ENCODE measurements at regions of chr3 and their contacts with region 1.

Region 1: DNA sequence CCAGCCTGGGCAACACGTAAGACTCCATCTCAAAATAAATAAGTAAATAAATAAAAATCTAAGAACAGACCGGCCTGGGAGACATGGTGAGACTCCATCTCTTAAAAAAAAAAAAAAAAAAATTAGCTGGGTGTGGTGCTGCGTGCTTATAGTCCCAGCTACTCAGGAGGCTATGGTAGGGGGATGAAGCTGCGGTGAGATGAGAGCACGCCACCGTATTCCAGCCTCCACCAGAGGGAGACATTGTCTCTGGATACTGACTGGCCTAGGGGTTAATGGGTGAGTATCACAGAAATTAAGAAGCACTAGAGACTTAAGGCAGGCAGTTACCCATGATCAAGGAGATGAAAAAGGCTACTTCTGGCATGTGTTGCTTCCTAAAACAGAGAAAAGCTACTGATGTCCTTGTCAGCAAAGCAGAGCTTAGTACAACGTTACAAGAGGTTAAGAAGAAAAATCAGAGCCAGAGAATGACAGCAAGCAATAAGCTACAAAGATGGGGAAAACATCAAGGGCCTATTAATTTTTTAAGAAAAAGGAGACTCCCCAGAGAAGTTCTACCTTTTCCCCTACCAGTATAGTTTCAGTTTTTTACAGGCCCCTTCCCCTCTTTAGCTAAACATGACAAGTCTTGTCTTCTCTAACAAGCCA is 8.6 kb downstream of the TFRC start:
- DNase-seq: peak; percentile 39
- ATAC-seq: peak; percentile 97
- H3K4me3 Mint-ChIP-seq: no peak overlapping the region
- H3K27ac Mint-ChIP-seq: no peak overlapping the region
- H3K4me1 Mint-ChIP-seq: peaks cover 31% of the 10 kb centered on the region
- H3K27me3 Mint-ChIP-seq: no peaks in the 10 kb centered on the region
- CTCF ChIP-seq: no peak

Region 2: DNA sequence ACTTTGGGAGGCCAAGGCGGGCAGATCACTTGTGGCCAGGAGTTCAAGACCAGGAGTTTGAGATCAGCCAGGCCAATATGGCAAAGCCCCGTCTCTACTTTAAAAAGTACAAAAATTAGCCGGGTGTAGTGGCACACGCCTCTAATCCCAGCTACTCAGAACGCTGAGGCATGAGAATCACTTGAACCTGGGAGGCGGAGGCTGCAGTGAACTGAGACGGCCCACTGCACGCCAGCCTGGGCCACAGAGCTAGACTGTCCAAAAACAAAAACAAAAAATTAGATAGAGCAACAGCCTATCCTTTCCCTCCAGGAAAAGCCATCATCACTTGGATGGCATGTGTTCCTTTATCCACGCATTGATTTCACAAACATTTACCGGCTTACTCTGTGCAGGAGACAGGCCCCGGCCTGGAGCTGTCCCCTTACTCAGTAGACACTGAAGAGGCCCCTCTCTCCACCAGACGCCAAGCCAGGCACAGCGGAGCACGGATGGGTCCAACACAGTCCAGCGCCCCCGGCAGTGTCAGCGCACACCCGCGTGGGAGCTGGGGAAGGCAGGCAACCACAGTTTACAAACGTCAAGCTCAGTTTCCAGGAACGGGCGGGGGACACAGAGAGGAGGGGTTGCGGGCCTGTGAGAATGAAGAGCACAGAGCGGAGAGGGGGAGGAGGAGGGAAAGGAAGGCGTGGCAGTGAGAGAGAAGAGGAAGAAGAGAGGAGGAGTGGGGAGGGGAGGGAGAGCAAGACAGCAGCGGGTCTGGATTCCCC is 1677.3 kb before region 1 on chr3:
- CTCF ChIA-PET with region 1: no interaction called
- POLR2A ChIA-PET with region 1: no interaction called
- intact Hi-C with region 1: no loop called
- DNase-seq: no peak
- ATAC-seq: no peak
- H3K4me3 Mint-ChIP-seq: peak overlapping the region; percentile 48
- H3K27ac Mint-ChIP-seq: no peak overlapping the region
- H3K4me1 Mint-ChIP-seq: peaks cover 32% of the 10 kb centered on the region
- H3K27me3 Mint-ChIP-seq: peaks cover 28% of the 10 kb centered on the region
- CTCF ChIP-seq: no peak

Region 3: GRCh38 chr3:195850857-195851543 is 222.3 kb before region 1 on chr3:
- CTCF ChIA-PET with region 1: no interaction called
- POLR2A ChIA-PET with region 1: no interaction called
- intact Hi-C with region 1: no loop called
- DNase-seq: peak; percentile 61
- ATAC-seq: peak; percentile 100
- H3K4me3 Mint-ChIP-seq: peak overlapping the region; percentile 35
- H3K27ac Mint-ChIP-seq: no peak overlapping the region
- H3K4me1 Mint-ChIP-seq: peaks cover 10% of the 10 kb centered on the region
- H3K27me3 Mint-ChIP-seq: peaks cover 11% of the 10 kb centered on the region
- CTCF ChIP-seq: peak; percentile 100

Region 4: GRCh38 chr3:196096382-196096953 is 23.2 kb after region 1 on chr3:
- CTCF ChIA-PET with region 1: interaction called, 10 read pairs
- POLR2A ChIA-PET with region 1: interaction called, 6 read pairs
- intact Hi-C with region 1: no loop called
- DNase-seq: peak; percentile 18
- ATAC-seq: peak; percentile 82
- H3K4me3 Mint-ChIP-seq: peak overlapping the region; percentile 61
- H3K27ac Mint-ChIP-seq: peak overlapping the region; percentile 89
- H3K4me1 Mint-ChIP-seq: peaks cover 42% of the 10 kb centered on the region
- H3K27me3 Mint-ChIP-seq: no peaks in the 10 kb centered on the region
- CTCF ChIP-seq: no peak

Region 5: DNA sequence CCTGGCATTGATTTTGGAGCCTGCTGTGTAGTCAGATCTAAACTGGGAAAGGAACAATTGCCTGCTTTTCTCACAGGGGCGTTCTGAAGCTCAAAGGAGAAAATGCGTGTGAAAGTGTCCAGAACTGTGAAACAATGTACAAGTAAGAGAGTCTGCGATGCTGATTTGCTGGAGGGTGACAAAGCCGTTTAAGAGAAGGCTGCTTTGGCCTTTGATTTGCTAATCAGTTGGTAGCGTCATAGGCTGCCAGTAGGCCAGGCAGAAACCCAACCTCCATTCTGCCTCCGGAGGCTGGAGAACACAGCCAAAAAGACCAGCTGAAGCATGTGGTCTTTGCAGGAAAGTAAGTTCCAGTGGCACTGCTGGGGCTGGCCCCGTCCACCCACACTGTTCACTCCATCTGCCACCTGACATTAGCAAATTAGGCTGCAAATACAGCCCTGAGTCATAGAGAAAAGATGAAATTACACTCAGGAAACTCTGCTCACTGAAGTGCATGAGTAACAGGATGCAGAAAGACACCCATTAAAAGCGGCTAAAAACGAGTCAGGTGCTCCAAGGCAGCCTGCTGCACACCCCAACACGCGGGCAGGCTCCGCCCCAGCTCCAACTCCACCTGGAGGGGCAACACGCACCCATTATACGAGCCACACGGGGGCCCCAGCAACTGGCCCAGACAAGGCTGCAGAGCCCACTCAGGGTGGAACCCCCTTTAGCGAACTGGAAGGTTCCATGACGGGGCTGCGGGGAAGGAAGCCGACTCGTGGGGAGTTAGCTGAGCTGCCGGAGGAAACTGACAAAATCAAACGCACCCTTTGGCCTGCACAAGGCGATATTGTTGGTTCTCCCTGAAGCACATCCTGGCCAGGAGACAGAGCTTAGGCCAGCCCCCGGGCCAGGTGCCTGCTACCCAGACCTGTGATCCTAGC is 106.3 kb after region 1 on chr3:
- CTCF ChIA-PET with region 1: interaction called, 36 read pairs
- POLR2A ChIA-PET with region 1: interaction called, 14 read pairs
- intact Hi-C with region 1: loop called (anchors 1 kb)
- DNase-seq: peak; percentile 73
- ATAC-seq: peak; percentile 80
- H3K4me3 Mint-ChIP-seq: peak overlapping the region; percentile 66
- H3K27ac Mint-ChIP-seq: peak overlapping the region; percentile 97
- H3K4me1 Mint-ChIP-seq: peaks cover 48% of the 10 kb centered on the region
- H3K27me3 Mint-ChIP-seq: no peaks in the 10 kb centered on the region
- CTCF ChIP-seq: no peak

Region 6: DNA sequence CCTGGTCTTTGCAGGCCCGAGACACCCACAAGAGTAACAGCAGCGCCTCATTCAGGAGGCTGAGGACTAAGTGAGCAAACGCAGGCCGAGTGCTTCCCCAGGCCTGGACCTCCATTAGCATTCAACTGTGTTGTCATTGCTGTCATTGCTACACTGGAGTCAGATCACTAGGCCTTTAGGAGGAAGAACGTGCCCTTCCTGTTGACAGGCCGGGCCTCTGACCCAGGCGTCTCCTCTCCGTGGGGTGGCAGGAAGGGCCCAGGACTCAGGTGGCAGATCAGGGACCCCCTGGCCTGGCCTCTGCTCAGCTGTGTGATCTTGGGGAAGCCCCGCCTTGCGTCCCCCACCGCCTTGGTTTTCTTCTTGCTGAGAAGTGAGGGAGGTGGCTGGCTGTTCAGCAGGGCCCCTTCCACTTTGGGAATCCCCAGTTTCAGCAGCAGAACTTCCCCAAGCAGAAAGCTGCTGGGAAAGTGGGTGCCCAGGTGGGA is 118.8 kb after region 1 on chr3:
- CTCF ChIA-PET with region 1: interaction called, 172 read pairs
- POLR2A ChIA-PET with region 1: interaction called, 50 read pairs
- intact Hi-C with region 1: loop called (anchors 1 kb)
- DNase-seq: peak; percentile 68
- ATAC-seq: peak; percentile 73
- H3K4me3 Mint-ChIP-seq: peak overlapping the region; percentile 70
- H3K27ac Mint-ChIP-seq: peak overlapping the region; percentile 98
- H3K4me1 Mint-ChIP-seq: peaks cover 62% of the 10 kb centered on the region
- H3K27me3 Mint-ChIP-seq: no peaks in the 10 kb centered on the region
- CTCF ChIP-seq: no peak

Region 7: GRCh38 chr3:196207833-196208607 is 134.7 kb after region 1 on chr3:
- CTCF ChIA-PET with region 1: interaction called, 12 read pairs
- POLR2A ChIA-PET with region 1: no interaction called
- intact Hi-C with region 1: no loop called
- DNase-seq: no peak
- ATAC-seq: peak; percentile 74
- H3K4me3 Mint-ChIP-seq: peak overlapping the region; percentile 85
- H3K27ac Mint-ChIP-seq: peak overlapping the region; percentile 76
- H3K4me1 Mint-ChIP-seq: peaks cover 43% of the 10 kb centered on the region
- H3K27me3 Mint-ChIP-seq: no peaks in the 10 kb centered on the region
- CTCF ChIP-seq: no peak

Region 8: GRCh38 chr3:196235452-196236122 is 162.3 kb after region 1 on chr3:
- CTCF ChIA-PET with region 1: no interaction called
- POLR2A ChIA-PET with region 1: interaction called, 16 read pairs
- intact Hi-C with region 1: no loop called
- DNase-seq: no peak
- ATAC-seq: no peak
- H3K4me3 Mint-ChIP-seq: no peak overlapping the region
- H3K27ac Mint-ChIP-seq: peak overlapping the region; percentile 13
- H3K4me1 Mint-ChIP-seq: peaks cover 14% of the 10 kb centered on the region
- H3K27me3 Mint-ChIP-seq: no peaks in the 10 kb centered on the region
- CTCF ChIP-seq: no peak

Region 9: DNA sequence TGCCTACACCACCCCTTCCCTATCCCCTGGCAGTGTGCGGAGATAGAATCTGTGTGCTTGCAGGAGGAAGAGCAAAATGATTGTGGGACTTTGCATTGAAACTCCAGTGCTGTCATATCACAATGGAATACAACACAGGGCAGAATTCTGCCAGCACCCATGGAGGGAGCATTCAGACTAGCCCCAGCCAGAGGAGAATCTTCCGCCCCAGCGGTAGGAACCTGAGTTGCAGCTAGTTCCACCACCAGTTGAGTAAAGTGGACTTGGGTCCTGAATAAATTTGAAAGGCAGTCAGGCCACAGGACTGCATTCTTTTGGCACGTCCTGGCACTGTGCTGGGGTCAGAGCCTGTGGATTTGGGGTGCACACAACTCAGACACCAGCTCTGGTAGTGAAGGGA is 841.6 kb after region 1 on chr3:
- CTCF ChIA-PET with region 1: no interaction called
- POLR2A ChIA-PET with region 1: no interaction called
- intact Hi-C with region 1: no loop called
- DNase-seq: no peak
- ATAC-seq: no peak
- H3K4me3 Mint-ChIP-seq: no peak overlapping the region
- H3K27ac Mint-ChIP-seq: no peak overlapping the region
- H3K4me1 Mint-ChIP-seq: peaks cover 2% of the 10 kb centered on the region
- H3K27me3 Mint-ChIP-seq: no peaks in the 10 kb centered on the region
- CTCF ChIP-seq: no peak

Measured in activated B cell treated with CpG ODN at 0.5 μM for 24 hours (primary cell).